BJ (cell line): ENCODE measurements at regions of chr12 and their contacts with region 1.

Region 1: GRCh38 chr12:47686645-47687240 is 19.1 kb downstream of the RPAP3 start:
- DNase-seq: no peak
- H3K4me3 ChIP-seq: no peak overlapping the region
- H3K27me3 ChIP-seq: no peaks in the 10 kb centered on the region
- CTCF ChIP-seq: peak; percentile 78

Region 2: DNA sequence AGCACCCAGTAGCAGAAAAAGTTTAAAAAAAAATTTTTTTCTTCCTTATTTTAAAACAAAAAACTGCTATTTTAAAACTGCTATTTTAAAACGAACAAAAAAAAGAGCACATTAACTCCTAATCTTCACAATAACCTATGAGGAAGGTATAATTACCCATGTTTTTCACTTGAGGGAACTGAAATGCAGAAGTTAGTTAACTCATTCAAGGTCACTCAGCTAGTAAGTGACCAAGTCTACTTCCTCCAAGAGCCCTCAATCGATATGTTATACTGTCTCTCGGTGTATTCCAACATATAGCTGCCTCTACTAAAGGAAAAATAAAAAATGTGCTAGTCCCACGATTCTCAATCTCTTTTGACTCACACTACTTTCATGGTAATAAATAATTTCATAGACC is 11.3 kb after region 1 on chr12:
- CTCF ChIA-PET with region 1: interaction called, 10 read pairs
- POLR2A ChIA-PET with region 1: interaction called, 5 read pairs
- DNase-seq: no peak
- H3K4me3 ChIP-seq: no peak overlapping the region
- H3K27me3 ChIP-seq: no peaks in the 10 kb centered on the region
- CTCF ChIP-seq: no peak

Region 3: DNA sequence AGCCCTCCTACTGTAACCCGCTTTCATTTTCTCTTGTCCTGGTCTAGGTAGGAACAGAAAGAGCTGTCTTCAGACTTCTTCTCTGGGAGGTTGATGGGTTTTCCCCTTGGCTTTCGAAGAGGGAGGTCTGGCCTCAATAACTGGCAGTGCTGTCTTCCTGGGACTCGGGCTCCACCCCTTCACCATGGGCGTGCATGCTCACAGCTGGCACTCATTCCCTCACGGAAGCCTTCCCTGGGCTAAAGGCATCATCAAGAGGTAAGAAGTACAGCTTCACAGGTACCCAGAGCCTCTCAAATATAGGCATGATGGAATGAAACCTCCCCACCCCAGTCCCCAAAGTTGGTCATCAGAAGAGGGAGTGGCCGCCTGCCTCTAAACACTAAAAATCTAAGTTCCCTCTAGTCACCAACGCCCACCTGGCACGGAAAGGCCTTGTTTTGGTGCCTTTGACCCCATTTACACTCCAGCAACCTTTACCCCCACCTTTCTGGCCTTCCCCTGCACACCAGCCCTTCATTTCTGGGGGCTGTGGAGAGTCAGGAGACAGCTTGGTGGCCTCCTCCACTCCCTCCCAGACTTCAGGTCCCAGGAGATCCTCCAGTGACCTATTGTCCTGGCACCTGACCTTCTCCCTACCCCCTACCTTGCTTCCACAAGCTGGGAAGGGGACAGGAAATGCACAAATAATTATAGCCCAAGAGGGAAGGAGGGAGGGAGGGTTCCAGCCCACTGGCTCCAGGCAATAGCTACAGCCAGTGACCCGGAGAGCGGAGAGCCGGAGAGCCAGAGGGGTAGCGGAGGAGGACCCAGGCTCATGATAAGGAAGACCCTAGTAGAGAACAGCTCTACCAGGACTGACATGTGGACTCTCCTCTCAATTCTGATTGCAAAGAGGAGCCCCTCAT is 69.2 kb after region 1 on chr12:
- CTCF ChIA-PET with region 1: no interaction called
- POLR2A ChIA-PET with region 1: no interaction called
- DNase-seq: no peak
- H3K4me3 ChIP-seq: no peak overlapping the region
- H3K27me3 ChIP-seq: no peaks in the 10 kb centered on the region
- CTCF ChIP-seq: no peak